Posterior vena cava (tissue), 2 donors: ENCODE measurements at regions of chr14 and their contacts with region 1.

Region 1: GRCh38 chr14:61444215-61444768 is 122.9 kb downstream of the PRKCH start:
- DNase-seq: no peak

Region 2: GRCh38 chr14:61403411-61403810 is 40.9 kb before region 1 on chr14:
- intact Hi-C with region 1: no loop called
- DNase-seq: no peak

Region 3: GRCh38 chr14:62126879-62127478 is 682.7 kb after region 1 on chr14:
- intact Hi-C with region 1: loop called in 1 of 2 experiments (anchors 10 kb)
- DNase-seq: no peak